ENCODE measurements at regions of chr3 and their contacts with region 1.

Region 1: GRCh38 chr3:15268033-15268631 is 62.1 kb downstream of the CAPN7 start:
- DNase-seq: peak; percentile 90
- H3K4me3 Mint-ChIP-seq: no peak overlapping the region
- H3K27ac Mint-ChIP-seq: no peak overlapping the region
- H3K4me1 Mint-ChIP-seq: peaks cover 67% of the 10 kb centered on the region
- H3K27me3 Mint-ChIP-seq: no peaks in the 10 kb centered on the region

Region 2: GRCh38 chr3:14803101-14803980 is 464.8 kb before region 1 on chr3:
- CTCF ChIA-PET with region 1: no interaction called
- DNase-seq: peak; percentile 32
- H3K4me3 Mint-ChIP-seq: no peak overlapping the region
- H3K27ac Mint-ChIP-seq: no peak overlapping the region
- H3K4me1 Mint-ChIP-seq: peaks cover 41% of the 10 kb centered on the region
- H3K27me3 Mint-ChIP-seq: peaks cover 87% of the 10 kb centered on the region

Region 3: GRCh38 chr3:15205934-15206661 is 62.0 kb before region 1 on chr3 and contains the start of gene CAPN7:
- CTCF ChIA-PET with region 1: interaction called, 59 read pairs
- DNase-seq: peak; percentile 95
- H3K4me3 Mint-ChIP-seq: peak within 1 kb of the TSS; percentile 78
- H3K27ac Mint-ChIP-seq: peak within 1 kb of the TSS; percentile 90
- H3K4me1 Mint-ChIP-seq: peaks cover 27% of the 10 kb centered on the region
- H3K27me3 Mint-ChIP-seq: peaks cover 9% of the 10 kb centered on the region

Region 4: GRCh38 chr3:15241341-15241740 is 26.8 kb before region 1 on chr3:
- CTCF ChIA-PET with region 1: no interaction called
- DNase-seq: peak; percentile 72
- H3K4me3 Mint-ChIP-seq: no peak overlapping the region
- H3K27ac Mint-ChIP-seq: no peak overlapping the region
- H3K4me1 Mint-ChIP-seq: peaks cover 5% of the 10 kb centered on the region
- H3K27me3 Mint-ChIP-seq: no peaks in the 10 kb centered on the region

Region 5: DNA sequence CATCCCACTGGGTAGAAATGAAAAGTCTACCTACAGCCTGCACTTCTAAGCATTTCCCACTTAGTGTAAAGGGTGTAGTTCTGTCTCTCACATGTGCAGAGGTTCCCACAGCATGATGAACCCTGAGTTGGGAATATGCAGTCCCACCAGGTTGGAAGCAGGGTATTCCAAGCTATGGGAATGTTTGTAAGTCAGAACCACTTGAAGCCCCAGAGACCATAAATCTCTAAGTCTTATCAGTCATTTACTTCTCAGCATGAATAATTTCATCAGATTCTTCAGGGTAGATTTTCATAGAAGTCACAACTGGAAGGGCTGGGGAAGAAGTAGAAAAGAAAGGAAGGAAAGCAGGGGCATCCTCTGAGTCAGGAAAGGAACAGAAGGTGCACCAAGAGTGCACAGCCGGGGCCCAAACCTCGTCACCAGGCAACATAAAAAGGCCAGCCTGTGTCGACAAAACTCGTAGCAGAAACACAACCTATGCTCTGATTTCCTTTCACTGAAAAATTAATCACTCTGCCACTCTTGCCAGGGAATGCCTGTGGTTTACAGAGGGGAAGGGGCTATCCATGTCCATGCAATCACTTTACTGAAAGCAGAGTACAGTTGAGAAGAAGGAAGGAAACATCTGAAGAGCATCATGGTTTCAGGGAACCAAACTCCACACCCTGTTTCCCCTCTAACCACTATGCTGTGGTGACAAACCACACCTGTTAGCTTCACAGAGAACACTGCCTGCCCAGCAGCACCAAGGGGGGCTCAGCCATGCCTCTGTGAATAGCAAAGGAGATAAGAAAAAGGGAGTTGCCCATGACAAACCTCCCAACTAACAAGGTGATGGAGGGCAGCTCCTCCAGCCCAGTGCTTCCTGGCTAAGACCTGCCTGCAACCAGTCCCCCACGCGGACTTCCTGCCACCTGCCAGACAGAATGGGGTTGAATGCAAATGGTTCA is 23.7 kb after region 1 on chr3:
- CTCF ChIA-PET with region 1: interaction called, 23 read pairs
- DNase-seq: peak; percentile 85
- H3K4me3 Mint-ChIP-seq: peak overlapping the region; percentile 64
- H3K27ac Mint-ChIP-seq: peak overlapping the region; percentile 95
- H3K4me1 Mint-ChIP-seq: peaks cover 86% of the 10 kb centered on the region
- H3K27me3 Mint-ChIP-seq: no peaks in the 10 kb centered on the region

Region 6: DNA sequence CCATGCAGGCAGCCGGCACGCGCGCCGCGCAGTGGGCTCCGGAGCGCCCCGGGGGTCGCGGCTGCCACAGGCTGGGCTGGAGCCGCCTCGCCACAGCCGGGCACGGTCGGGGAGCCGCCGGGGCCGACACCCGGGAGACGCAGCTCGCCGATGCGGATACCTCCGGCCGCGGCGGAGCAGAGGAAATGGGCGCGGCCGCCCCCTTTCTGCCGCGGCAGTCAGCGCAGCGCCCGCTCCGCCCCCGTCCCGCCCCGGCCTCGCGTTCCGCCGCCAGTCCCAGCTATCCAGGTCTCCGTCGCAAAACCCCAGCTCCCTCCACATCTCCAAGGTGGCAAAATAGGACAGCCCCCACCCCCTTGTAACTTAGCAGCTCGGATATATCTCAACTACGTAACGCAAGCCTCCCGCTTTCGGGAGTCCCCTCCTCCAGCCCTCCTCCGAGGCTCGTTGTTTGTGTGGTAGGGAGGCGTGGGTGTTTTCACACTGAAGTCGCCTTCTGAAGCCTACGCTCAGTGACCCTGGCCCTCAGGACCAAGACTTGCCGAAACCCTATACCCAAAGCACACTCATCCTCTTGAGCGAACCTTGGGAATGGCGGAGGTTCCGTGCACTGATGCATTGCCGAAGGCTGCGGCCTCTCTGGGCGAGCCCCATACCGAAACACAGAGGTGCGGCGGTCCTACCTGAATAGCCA is 64.4 kb after region 1 on chr3 and contains the start of gene SH3BP5:
- CTCF ChIA-PET with region 1: interaction called, 182 read pairs
- DNase-seq: peak; percentile 83
- H3K4me3 Mint-ChIP-seq: peak within 1 kb of the TSS; percentile 86
- H3K27ac Mint-ChIP-seq: peak within 1 kb of the TSS; percentile 84
- H3K4me1 Mint-ChIP-seq: peaks cover 59% of the 10 kb centered on the region
- H3K27me3 Mint-ChIP-seq: peaks cover 9% of the 10 kb centered on the region

Region 7: GRCh38 chr3:15377961-15378791 is 110.0 kb after region 1 on chr3:
- CTCF ChIA-PET with region 1: interaction called, 140 read pairs
- DNase-seq: peak; percentile 97
- H3K4me3 Mint-ChIP-seq: no peak overlapping the region
- H3K27ac Mint-ChIP-seq: peak overlapping the region; percentile 78
- H3K4me1 Mint-ChIP-seq: peaks cover 16% of the 10 kb centered on the region
- H3K27me3 Mint-ChIP-seq: peaks cover 1% of the 10 kb centered on the region

Region 8: DNA sequence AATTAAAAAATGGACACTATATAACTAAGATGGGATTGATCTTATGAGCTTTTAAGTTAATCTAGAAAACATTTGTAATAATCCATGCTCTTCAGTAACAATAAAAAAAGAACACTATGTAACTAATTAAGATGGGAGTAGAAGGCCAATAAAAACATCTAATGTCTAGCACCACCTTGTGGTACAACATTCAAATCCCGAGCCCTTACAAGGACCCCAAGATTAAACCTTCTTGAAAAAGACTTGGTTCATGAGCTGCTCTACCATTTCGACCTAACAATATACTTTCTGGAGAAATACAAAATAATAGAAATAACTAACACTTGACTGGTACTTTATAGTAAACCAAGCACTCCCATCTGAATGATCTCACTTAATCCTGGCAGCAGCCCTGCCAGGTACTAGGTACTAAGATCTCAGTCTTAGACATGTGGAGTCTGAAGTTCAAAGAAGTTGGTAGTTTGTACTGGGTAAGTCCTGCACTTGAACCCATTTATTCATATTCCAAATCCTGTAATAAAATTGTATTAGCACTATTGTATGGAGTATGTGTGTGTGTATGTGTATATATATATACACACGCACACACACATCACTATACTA is 137.4 kb after region 1 on chr3:
- CTCF ChIA-PET with region 1: interaction called, 82 read pairs
- DNase-seq: peak; percentile 43
- H3K4me3 Mint-ChIP-seq: no peak overlapping the region
- H3K27ac Mint-ChIP-seq: no peak overlapping the region
- H3K4me1 Mint-ChIP-seq: peaks cover 14% of the 10 kb centered on the region
- H3K27me3 Mint-ChIP-seq: no peaks in the 10 kb centered on the region